ENCODE measurements at regions of chr19 and their contacts with region 1.

Region 1: GRCh38 chr19:40139533-40140287 is 49.0 kb upstream of the ZNF780A start:
- DNase-seq: peak; percentile 19
- H3K4me3 ChIP-seq: no peak overlapping the region
- H3K27ac ChIP-seq: no peak overlapping the region
- H3K4me1 ChIP-seq: no peaks in the 10 kb centered on the region
- H3K27me3 ChIP-seq: no peaks in the 10 kb centered on the region
- CTCF ChIP-seq: peak; percentile 30 to 78 (median 65)
- POLR2A ChIP-seq: no peak

Region 2: GRCh38 chr19:40119380-40119779 is 20.3 kb before region 1 on chr19:
- intact Hi-C with region 1: no loop called
- DNase-seq: no peak
- H3K4me3 ChIP-seq: no peak overlapping the region
- H3K27ac ChIP-seq: no peak overlapping the region
- H3K4me1 ChIP-seq: no peaks in the 10 kb centered on the region
- H3K27me3 ChIP-seq: no peaks in the 10 kb centered on the region
- CTCF ChIP-seq: no peak
- POLR2A ChIP-seq: no peak

Region 3: DNA sequence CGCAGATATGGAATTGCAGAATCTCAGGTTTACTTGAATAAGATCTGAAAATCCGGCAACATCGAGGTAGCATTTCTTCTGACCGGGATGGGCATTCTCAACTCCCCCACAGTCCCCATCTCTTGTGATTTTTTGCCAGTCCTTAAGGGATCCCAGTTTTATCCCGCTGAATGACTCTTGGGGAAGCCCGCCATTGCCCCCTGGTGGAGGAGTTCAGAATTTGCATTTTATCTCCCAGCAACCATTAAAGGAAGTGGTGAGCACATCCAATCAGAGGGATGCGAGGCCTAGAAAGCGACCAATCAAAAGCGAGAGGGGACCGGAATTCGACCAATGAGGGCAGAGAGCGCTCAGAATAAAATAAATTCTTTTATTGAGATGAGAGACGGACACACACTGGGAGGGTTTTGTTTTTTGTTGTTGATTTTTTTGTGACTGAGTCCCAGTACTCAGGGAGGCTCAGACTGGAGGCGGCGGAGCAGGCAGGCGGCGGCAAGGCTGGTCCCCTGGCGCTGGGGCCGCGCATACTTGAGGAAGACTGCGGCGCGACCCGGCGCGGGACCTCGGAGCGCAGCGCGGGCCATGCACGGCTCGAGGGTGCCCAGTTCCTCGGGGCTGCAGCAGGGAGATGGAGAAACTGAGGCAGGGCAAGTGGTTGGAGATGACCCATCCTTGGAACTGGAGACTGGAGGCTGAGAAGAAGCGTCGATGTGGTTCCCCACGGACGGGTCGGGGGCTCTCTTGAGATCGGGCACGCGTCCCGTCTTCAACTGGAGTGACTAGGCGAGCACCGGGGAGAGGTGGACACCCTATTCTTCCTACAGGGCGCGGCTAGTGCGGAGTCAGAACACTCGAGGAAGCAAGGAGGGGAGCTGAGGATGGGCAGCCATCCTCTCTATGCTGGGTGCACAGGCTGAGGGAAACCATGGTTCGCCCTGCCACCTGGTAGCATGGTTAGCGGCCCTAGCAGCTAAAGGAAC is 82.4 kb after region 1 on chr19:
- intact Hi-C with region 1: loop called (anchors 5 kb)
- DNase-seq: peak; percentile 72
- H3K4me3 ChIP-seq: no peak overlapping the region
- H3K27ac ChIP-seq: no peak overlapping the region
- H3K4me1 ChIP-seq: no peaks in the 10 kb centered on the region
- H3K27me3 ChIP-seq: peaks cover 7% of the 10 kb centered on the region
- CTCF ChIP-seq: peak; percentile 69 to 91 (median 85)
- POLR2A ChIP-seq: no peak

Measured in prostate gland (tissue), 2 donors.